Gastrocnemius medialis (tissue), 4 donors: ENCODE measurements at regions of chr11 and their contacts with region 1.

Region 1: GRCh38 chr11:35288817-35289541 is 130.4 kb downstream of the SLC1A2 start:
- DNase-seq: no peak
- ATAC-seq: no peak
- H3K4me3 ChIP-seq: no peak overlapping the region
- H3K27ac ChIP-seq: no peak overlapping the region
- H3K4me1 ChIP-seq: no peaks in the 10 kb centered on the region
- H3K27me3 ChIP-seq: no peaks in the 10 kb centered on the region
- CTCF ChIP-seq: no peak
- POLR2A ChIP-seq: no peak

Region 2: GRCh38 chr11:35343033-35343598 is 54.1 kb after region 1 on chr11:
- in situ Hi-C with region 1: no loop called
- intact Hi-C with region 1: loop called (anchors 10 kb)
- DNase-seq: no peak
- ATAC-seq: no peak
- H3K4me3 ChIP-seq: no peak overlapping the region
- H3K27ac ChIP-seq: no peak overlapping the region
- H3K4me1 ChIP-seq: peaks cover 0 to 19% of the 10 kb centered on the region in 2 donors
- H3K27me3 ChIP-seq: peaks cover 0 to 2% (median 0%) of the 10 kb centered on the region in 3 donors
- CTCF ChIP-seq: no peak
- POLR2A ChIP-seq: no peak

Region 3: DNA sequence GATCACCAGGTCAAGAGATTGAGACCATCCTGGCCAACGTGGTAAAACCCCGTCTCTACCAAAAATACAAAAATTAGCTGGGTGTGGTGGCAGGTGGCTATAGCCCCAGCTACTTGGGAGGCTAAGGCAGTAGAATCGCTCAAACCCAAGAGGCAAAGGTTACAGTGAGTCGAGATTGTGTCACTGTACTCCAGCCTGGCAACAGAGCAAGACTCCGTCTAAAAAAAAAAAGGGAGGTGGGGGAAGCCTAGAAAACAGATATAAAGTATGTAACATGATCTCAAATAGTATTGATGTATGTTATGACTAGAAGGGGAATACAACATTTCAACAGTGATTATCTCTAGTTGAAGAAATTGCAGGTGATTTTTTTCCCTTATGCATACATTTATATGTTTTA is 68.9 kb after region 1 on chr11:
- in situ Hi-C with region 1: no loop called
- intact Hi-C with region 1: no loop called
- DNase-seq: no peak
- ATAC-seq: no peak
- H3K4me3 ChIP-seq: no peak overlapping the region
- H3K27ac ChIP-seq: no peak overlapping the region
- H3K4me1 ChIP-seq: peaks cover 6 to 12% of the 10 kb centered on the region in 2 donors
- H3K27me3 ChIP-seq: no peaks in the 10 kb centered on the region
- CTCF ChIP-seq: no peak
- POLR2A ChIP-seq: no peak